ENCODE measurements at regions of chr9 and their contacts with region 1.

Region 1: DNA sequence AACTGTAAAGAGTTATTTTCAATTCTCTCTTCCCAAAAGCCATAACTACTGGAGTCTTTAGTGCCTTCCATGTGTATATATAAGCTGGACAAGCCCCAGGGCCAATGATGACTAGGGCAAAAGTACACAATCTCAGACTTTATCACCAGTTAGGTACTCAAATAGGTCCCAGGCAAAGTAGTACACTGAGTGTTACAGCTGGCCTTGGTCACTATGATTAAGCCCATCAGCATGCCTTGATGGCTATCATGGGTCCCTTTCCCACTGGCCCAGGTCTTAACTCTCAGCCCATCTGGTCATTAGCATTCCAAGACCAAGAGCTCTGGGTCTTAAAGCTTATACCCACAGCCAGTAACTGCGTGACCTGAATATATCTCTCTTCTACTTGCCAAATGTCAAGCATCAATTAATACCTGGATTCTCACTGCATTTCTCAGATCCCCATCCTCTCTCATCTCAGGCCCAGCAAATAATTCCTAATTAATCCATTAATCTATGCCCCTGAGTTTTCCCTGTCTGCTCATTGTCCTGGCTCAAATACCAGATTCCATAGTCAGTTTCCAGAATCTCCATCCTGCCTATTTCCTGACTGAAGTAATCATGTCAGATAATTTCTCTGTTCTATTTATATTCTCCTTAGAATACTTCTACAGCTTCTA is 62.3 kb downstream of the NR6A1 start:
- DNase-seq: no peak
- H3K4me3 Mint-ChIP-seq: no peak overlapping the region
- H3K27ac Mint-ChIP-seq: no peak overlapping the region
- H3K4me1 Mint-ChIP-seq: peaks cover 6% of the 10 kb centered on the region
- H3K27me3 Mint-ChIP-seq: no peaks in the 10 kb centered on the region
- CTCF ChIP-seq: no peak

Region 2: GRCh38 chr9:124420991-124421543 is 287.7 kb before region 1 on chr9:
- CTCF ChIA-PET with region 1: interaction called, 5 read pairs
- POLR2A ChIA-PET with region 1: no interaction called
- intact Hi-C with region 1: loop called (anchors 1 kb)
- DNase-seq: no peak
- H3K4me3 Mint-ChIP-seq: no peak overlapping the region
- H3K27ac Mint-ChIP-seq: no peak overlapping the region
- H3K4me1 Mint-ChIP-seq: no peaks in the 10 kb centered on the region
- H3K27me3 Mint-ChIP-seq: peaks cover 15% of the 10 kb centered on the region
- CTCF ChIP-seq: no peak

Region 3: DNA sequence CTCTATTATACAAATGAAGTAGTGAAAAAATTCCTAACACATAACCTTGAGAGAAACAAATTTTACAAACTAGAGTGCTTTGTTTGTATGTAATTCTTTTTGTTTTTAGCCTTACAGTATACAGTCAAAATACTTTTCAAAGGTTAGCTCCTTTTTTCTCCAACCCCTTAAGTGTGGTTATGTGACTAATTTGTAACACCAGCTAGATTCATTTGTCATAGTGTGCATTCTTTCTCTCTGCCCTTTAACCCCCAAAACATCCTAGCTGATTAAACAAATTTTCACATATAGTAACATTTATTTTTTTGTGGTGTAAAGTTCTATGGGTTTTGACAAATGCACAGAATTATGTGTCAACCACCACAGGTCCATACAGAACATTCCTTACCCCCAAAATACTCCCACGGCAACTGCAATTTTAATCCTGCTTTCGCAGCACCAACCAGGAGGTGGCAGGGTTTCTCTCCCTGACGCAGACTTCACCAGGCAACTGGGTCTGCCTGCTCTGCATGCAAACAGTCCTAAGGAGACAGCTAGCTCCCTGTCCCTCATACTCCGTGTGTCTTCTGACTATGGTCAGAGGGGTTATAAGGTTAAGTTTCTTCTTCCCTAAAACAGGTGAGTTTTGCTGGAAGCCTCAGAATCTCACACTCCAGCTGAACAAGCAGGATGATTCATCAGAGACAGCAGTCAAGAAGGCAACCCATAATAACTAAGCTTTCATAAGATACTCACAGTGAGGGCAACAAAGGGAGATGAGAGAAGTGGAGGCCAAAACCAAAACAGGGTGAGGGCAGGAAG is 157.1 kb before region 1 on chr9:
- CTCF ChIA-PET with region 1: interaction called, 55 read pairs
- POLR2A ChIA-PET with region 1: interaction called, 4 read pairs
- intact Hi-C with region 1: loop called (anchors 1 kb)
- DNase-seq: peak; percentile 59
- H3K4me3 Mint-ChIP-seq: no peak overlapping the region
- H3K27ac Mint-ChIP-seq: no peak overlapping the region
- H3K4me1 Mint-ChIP-seq: no peaks in the 10 kb centered on the region
- H3K27me3 Mint-ChIP-seq: no peaks in the 10 kb centered on the region
- CTCF ChIP-seq: peak; percentile 78

Region 4: DNA sequence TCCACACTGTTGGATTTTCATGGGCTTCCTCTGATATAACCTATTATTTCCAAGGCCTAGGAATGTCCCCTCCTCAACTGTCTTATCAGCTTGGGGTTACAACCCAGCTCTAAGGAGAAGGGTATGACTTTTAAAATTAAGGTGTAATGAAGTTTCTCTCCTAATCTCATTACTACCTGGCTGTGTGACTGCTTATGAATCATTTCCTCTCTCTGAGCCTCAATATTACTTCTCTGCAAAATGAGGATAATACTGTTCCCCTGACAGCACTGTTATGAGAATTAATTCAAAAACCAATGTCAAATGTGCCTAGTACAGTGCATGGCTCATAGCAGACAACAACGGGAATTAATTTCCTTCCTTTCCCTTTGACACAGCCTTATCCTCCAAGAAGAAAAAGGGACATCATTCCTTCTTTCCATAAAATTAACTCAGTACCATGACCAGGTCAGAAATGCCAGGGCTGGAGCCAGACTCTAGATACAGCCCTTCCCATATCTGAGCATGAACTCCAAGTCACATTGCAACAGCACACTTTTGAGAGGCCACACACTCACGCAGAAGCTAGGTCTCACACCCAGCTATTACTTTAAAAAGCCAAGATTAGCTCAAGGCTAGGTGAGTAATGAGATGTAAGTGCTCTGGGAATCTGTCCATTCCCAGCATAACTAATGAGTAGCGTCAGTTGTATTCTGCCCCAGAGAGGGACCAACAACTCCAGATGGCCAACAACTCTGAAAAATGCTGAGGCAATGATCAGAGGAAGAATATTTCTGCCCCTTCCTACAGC is 56.4 kb before region 1 on chr9:
- CTCF ChIA-PET with region 1: interaction called, 33 read pairs
- POLR2A ChIA-PET with region 1: no interaction called
- intact Hi-C with region 1: no loop called
- DNase-seq: peak; percentile 96
- H3K4me3 Mint-ChIP-seq: peak overlapping the region; percentile 33
- H3K27ac Mint-ChIP-seq: peak overlapping the region; percentile 68
- H3K4me1 Mint-ChIP-seq: peaks cover 39% of the 10 kb centered on the region
- H3K27me3 Mint-ChIP-seq: no peaks in the 10 kb centered on the region
- CTCF ChIP-seq: no peak

Region 5: DNA sequence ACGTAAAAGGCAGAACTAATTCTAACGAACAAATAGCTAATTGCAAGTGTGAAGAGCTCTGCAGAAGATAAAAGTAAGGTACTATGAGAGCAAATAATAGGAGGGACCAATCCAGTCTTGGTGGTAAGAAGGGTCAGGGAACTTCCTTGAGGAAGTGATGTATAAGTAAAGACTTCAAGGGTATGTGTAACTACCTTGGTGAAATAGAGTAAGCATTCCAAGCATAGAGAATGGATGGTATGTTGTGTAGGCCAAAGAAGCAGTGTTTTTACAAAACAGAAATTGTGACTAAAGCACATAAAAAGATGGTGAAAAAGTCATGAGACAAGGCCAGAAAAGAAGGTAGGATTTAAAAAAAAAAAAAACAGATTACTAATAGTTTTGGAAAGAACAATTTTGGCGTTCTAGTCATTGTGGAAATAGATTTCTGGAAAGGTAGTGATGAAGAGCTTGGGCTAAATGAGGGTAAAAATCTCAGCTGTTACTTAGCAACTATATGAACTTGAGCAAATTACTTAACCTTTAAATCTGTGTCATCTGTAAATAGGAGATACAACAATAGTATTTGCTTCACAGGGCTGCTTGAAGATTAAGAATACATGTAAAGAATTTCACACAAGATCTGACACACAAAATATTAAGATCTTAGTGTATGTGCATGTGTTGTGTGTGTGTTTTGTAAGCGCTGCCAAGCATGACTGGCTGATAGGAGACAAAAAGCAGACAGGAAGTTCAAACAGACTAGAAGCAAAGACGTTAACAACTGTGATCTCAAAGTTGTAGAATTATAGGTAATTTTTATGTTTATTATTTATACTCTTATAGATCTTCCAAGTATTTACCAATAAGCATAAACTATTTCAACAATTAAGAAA is 11.2 kb before region 1 on chr9:
- CTCF ChIA-PET with region 1: interaction called, 26 read pairs
- POLR2A ChIA-PET with region 1: interaction called, 5 read pairs
- intact Hi-C with region 1: no loop called
- DNase-seq: no peak
- H3K4me3 Mint-ChIP-seq: peak overlapping the region; percentile 21
- H3K27ac Mint-ChIP-seq: no peak overlapping the region
- H3K4me1 Mint-ChIP-seq: peaks cover 30% of the 10 kb centered on the region
- H3K27me3 Mint-ChIP-seq: no peaks in the 10 kb centered on the region
- CTCF ChIP-seq: no peak

Region 6: DNA sequence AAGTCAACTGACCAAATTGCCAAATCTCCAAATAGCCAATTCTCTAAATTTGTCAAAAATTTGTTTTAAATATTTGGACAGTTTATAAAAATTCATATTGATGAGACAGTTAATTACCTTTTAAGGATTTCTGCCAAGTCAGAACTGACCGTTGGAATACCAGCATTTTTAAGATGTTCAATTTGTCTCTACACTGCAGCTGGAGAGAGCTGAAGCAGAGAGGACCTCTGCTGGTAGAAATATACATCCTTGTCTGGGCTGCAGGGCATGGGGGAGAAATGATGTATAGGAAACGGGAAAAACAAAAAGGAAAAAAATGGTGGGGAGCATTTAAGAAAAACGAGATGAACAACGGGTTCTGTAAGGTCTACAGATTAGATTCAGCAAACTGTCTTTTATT is 45.5 kb after region 1 on chr9:
- CTCF ChIA-PET with region 1: interaction called, 11 read pairs
- POLR2A ChIA-PET with region 1: no interaction called
- intact Hi-C with region 1: loop called (anchors 1 kb)
- DNase-seq: peak; percentile 47
- H3K4me3 Mint-ChIP-seq: no peak overlapping the region
- H3K27ac Mint-ChIP-seq: no peak overlapping the region
- H3K4me1 Mint-ChIP-seq: peaks cover 32% of the 10 kb centered on the region
- H3K27me3 Mint-ChIP-seq: no peaks in the 10 kb centered on the region
- CTCF ChIP-seq: peak; percentile 45

Region 7: GRCh38 chr9:124852829-124853531 is 144.2 kb after region 1 on chr9 and contains the start of gene WDR38:
- CTCF ChIA-PET with region 1: interaction called, 4 read pairs
- POLR2A ChIA-PET with region 1: no interaction called
- intact Hi-C with region 1: loop called (anchors 2 kb)
- DNase-seq: peak; percentile 80
- H3K4me3 Mint-ChIP-seq: peak within 1 kb of the TSS; percentile 54
- H3K27ac Mint-ChIP-seq: no peak within 1 kb of the TSS
- H3K4me1 Mint-ChIP-seq: peaks cover 6% of the 10 kb centered on the region
- H3K27me3 Mint-ChIP-seq: no peaks in the 10 kb centered on the region
- CTCF ChIP-seq: peak; percentile 99
- total RNA-seq, gene WDR38: not detected in 2 replicates

Measured in MCF 10A (cell line).